Gastrocnemius medialis (tissue), 4 donors: ENCODE measurements at regions of chr3 and their contacts with region 1.

Region 1: DNA sequence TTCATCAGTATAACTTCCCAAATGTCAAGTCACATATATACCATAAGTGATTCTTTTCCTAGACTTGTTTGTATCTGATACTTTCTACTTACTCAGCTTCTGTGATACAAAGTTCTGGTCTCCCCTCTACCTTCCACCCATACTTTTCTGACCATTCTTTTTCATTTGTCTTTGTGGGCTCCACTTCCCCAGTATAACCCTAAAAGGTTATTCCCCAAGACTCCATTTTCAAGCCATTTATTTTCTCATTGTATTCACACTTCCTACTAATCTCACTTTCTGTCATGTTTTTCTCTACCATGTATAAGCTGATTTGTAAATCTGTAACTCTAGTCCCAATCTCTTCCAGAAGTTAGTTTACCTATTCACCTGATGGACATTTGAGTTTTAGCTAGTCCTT is 34.0 kb downstream of the IQCB1 start:
- DNase-seq: no peak
- ATAC-seq: no peak
- H3K4me3 ChIP-seq: no peak overlapping the region
- H3K27ac ChIP-seq: no peak overlapping the region
- H3K4me1 ChIP-seq: no peaks in the 10 kb centered on the region
- H3K27me3 ChIP-seq: no peaks in the 10 kb centered on the region
- CTCF ChIP-seq: no peak
- POLR2A ChIP-seq: no peak

Region 2: DNA sequence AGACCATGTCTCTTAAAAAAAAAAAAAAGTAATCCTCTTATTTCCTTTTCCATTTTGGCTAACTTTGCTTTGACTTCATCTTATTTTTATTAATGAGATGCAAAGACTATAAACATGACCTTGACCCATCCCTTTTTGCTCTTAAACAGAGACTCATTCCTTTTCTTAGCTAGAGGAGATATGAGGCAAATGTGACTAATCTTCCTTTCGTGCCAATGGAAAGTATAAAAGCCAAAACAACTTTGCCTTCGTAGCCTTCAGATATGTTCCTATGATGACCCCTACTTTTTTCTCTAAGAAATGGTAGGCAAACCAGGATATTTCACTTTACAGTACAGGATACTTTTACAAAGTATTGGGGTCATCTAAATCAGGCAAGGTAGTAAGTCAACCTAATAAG is 14.4 kb before region 1 on chr3:
- in situ Hi-C with region 1: no loop called
- intact Hi-C with region 1: loop called (anchors 2 kb)
- DNase-seq: no peak
- ATAC-seq: no peak
- H3K4me3 ChIP-seq: no peak overlapping the region
- H3K27ac ChIP-seq: no peak overlapping the region
- H3K4me1 ChIP-seq: no peaks in the 10 kb centered on the region
- H3K27me3 ChIP-seq: no peaks in the 10 kb centered on the region
- CTCF ChIP-seq: no peak
- POLR2A ChIP-seq: no peak

Region 3: GRCh38 chr3:121878411-121878810 is 77.5 kb after region 1 on chr3:
- in situ Hi-C with region 1: no loop called
- intact Hi-C with region 1: no loop called
- DNase-seq: no peak
- ATAC-seq: no peak
- H3K4me3 ChIP-seq: no peak overlapping the region
- H3K27ac ChIP-seq: no peak overlapping the region
- H3K4me1 ChIP-seq: no peaks in the 10 kb centered on the region
- H3K27me3 ChIP-seq: no peaks in the 10 kb centered on the region
- CTCF ChIP-seq: no peak
- POLR2A ChIP-seq: no peak